ENCODE measurements at regions of chr19 and their contacts with region 1.

Region 1: DNA sequence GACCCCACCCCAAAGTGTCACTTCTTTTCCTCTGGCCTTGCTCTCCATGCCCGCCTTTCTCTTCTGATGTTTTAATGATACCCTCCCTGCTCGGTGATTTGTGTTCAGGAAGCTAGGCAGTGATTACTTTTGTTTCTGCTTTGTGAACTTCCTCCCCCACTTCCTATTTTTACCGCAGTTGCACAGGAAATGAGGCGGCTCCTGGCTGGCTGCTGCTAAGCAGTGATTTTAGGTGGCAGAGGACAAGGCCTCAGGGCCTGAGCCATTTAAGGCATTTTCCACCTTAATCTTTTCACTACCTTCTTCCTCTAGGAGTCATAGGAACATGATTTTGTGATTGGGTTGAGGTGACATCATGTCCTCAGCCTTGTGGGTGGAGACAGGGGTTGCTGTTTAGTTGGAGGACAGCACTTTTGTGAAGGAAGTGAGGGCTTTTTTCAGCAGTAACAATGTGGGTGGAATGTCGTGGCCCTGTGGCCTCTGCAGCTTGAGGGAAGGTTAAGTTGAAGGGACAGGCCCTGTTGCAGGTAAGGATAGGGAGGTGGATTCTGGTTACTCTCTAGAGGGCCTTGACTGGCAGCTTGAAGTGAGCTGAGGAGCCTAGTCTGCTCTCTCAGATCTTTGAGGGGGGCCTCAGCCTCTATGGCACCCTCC is 15.7 kb downstream of the GARRE1 start:
- DNase-seq: peak; percentile 87 to 93 (median 89)
- H3K4me3 ChIP-seq: peak overlapping the region; percentile 18 to 43
- H3K4me3 Mint-ChIP-seq: peak overlapping the region; percentile 68 to 87 (median 82)
- H3K27ac ChIP-seq: peak overlapping the region; percentile 68
- H3K27ac Mint-ChIP-seq: peak overlapping the region; percentile 90 to 99 (median 98)
- H3K4me1 ChIP-seq: peaks cover 95% of the 10 kb centered on the region
- H3K4me1 Mint-ChIP-seq: peaks cover 52 to 83% (median 74%) of the 10 kb centered on the region in 4 donors
- H3K27me3 ChIP-seq: no peaks in the 10 kb centered on the region
- H3K27me3 Mint-ChIP-seq: no peaks in the 10 kb centered on the region

Region 2: DNA sequence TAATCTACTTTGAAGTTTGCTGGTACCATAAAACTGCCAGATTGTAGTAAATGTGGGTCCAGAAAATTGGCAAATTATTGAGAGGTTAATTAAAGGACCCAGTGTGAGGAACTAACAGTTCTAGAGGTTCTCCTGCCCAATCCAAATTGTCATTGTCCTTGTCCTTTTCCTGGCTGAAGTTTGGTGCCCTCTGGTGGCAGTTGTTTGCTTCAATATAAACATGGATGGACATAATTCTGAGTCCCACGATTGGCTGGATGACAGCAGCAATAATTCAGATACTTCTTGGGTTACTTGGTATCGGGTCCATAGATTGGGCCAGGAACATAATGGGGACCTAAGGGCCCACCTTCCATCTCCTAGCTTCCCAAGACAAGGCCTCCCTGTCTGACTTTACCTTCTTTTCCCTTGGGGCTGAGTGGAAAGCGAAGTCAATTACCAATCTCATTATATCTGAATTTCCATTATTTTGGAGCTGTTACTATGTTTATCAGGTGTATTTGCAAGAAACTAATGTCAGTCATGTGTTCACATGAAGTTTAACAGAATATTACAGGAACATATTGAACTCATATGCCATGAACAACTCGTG is 49.5 kb before region 1 on chr19:
- CTCF ChIA-PET with region 1: interaction called, 9 read pairs
- POLR2A ChIA-PET with region 1: interaction called, 14 read pairs
- intact Hi-C with region 1: loop called (anchors 1 kb)
- DNase-seq: peak; percentile 39 to 57 (median 52)
- H3K4me3 ChIP-seq: no peak overlapping the region
- H3K4me3 Mint-ChIP-seq: peak overlapping the region in 1 of 8 donors; percentile 44
- H3K27ac ChIP-seq: no peak overlapping the region
- H3K27ac Mint-ChIP-seq: peak overlapping the region in 6 of 7 donors; percentile 0 to 83 (median 39)
- H3K4me1 ChIP-seq: peaks cover 42% of the 10 kb centered on the region
- H3K4me1 Mint-ChIP-seq: peaks cover 45 to 68% (median 53%) of the 10 kb centered on the region in 4 donors
- H3K27me3 ChIP-seq: no peaks in the 10 kb centered on the region
- H3K27me3 Mint-ChIP-seq: no peaks in the 10 kb centered on the region

Region 3: GRCh38 chr19:34253699-34254551 is 16.2 kb before region 1 on chr19:
- CTCF ChIA-PET with region 1: interaction called, 5 read pairs
- POLR2A ChIA-PET with region 1: interaction called, 19 read pairs
- intact Hi-C with region 1: loop called (anchors 1 kb)
- DNase-seq: peak in 3 of 5 donors; percentile 80 to 85 (median 82)
- H3K4me3 ChIP-seq: peak overlapping the region; percentile 67 to 75
- H3K4me3 Mint-ChIP-seq: peak overlapping the region; percentile 96 to 100 (median 98)
- H3K27ac ChIP-seq: peak overlapping the region; percentile 90
- H3K27ac Mint-ChIP-seq: peak overlapping the region; percentile 81 to 100 (median 99)
- H3K4me1 ChIP-seq: peaks cover 32% of the 10 kb centered on the region
- H3K4me1 Mint-ChIP-seq: peaks cover 17 to 42% (median 32%) of the 10 kb centered on the region in 4 donors
- H3K27me3 ChIP-seq: no peaks in the 10 kb centered on the region
- H3K27me3 Mint-ChIP-seq: no peaks in the 10 kb centered on the region

Region 4: GRCh38 chr19:34308381-34309367 is 38.6 kb after region 1 on chr19:
- CTCF ChIA-PET with region 1: interaction called, 3 read pairs
- POLR2A ChIA-PET with region 1: interaction called, 19 read pairs
- intact Hi-C with region 1: loop called (anchors 5 kb)
- DNase-seq: peak; percentile 55 to 82 (median 76)
- H3K4me3 ChIP-seq: no peak overlapping the region
- H3K4me3 Mint-ChIP-seq: peak overlapping the region in 7 of 8 donors; percentile 38 to 80 (median 78)
- H3K27ac ChIP-seq: peak overlapping the region; percentile 57
- H3K27ac Mint-ChIP-seq: peak overlapping the region; percentile 87 to 99 (median 95)
- H3K4me1 ChIP-seq: peaks cover 35% of the 10 kb centered on the region
- H3K4me1 Mint-ChIP-seq: peaks cover 42 to 69% (median 59%) of the 10 kb centered on the region in 4 donors
- H3K27me3 ChIP-seq: no peaks in the 10 kb centered on the region
- H3K27me3 Mint-ChIP-seq: no peaks in the 10 kb centered on the region

Region 5: DNA sequence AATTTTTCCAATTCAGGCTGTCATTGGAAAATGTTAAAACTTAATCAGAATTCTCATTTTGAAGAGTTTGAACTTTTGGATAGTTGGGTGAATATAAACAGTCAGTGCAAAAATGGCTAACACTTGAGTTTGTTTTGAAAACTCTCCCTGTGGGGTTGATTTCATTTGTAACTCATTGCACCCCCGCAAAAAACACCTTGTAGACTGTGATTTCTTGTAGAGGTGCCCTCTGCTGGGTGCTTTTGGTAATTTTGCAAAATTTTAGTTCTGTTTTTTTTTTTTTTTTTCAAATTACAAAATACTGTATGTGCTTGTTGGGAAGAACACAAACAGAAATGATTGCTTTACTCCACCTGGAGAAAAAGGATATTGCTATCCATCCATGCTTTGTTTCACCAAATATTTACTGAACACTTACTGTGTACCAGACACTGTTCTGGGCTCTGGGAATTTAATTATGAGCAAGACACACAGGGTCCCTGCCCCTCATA is 66.7 kb after region 1 on chr19:
- CTCF ChIA-PET with region 1: no interaction called
- POLR2A ChIA-PET with region 1: interaction called, 4 read pairs
- intact Hi-C with region 1: loop called (anchors 2 kb)
- DNase-seq: peak; percentile 54 to 58 (median 56)
- H3K4me3 ChIP-seq: no peak overlapping the region
- H3K4me3 Mint-ChIP-seq: no peak overlapping the region
- H3K27ac ChIP-seq: no peak overlapping the region
- H3K27ac Mint-ChIP-seq: peak overlapping the region in 6 of 7 donors; percentile 10 to 80 (median 64)
- H3K4me1 ChIP-seq: peaks cover 11% of the 10 kb centered on the region
- H3K4me1 Mint-ChIP-seq: peaks cover 4 to 10% (median 8%) of the 10 kb centered on the region in 4 donors
- H3K27me3 ChIP-seq: no peaks in the 10 kb centered on the region
- H3K27me3 Mint-ChIP-seq: no peaks in the 10 kb centered on the region

Region 6: GRCh38 chr19:34351382-34351826 is 81.3 kb after region 1 on chr19:
- CTCF ChIA-PET with region 1: interaction called, 4 read pairs
- POLR2A ChIA-PET with region 1: interaction called, 3 read pairs
- intact Hi-C with region 1: loop called (anchors 1 kb)
- DNase-seq: peak in 1 of 5 donors; percentile 43
- H3K4me3 ChIP-seq: no peak overlapping the region
- H3K4me3 Mint-ChIP-seq: peak overlapping the region in 5 of 8 donors; percentile 29 to 58 (median 46)
- H3K27ac ChIP-seq: peak overlapping the region; percentile 26
- H3K27ac Mint-ChIP-seq: peak overlapping the region; percentile 47 to 86 (median 73)
- H3K4me1 ChIP-seq: peaks cover 35% of the 10 kb centered on the region
- H3K4me1 Mint-ChIP-seq: peaks cover 14 to 38% (median 20%) of the 10 kb centered on the region in 4 donors
- H3K27me3 ChIP-seq: no peaks in the 10 kb centered on the region
- H3K27me3 Mint-ChIP-seq: no peaks in the 10 kb centered on the region

Measured in CD4-positive, alpha-beta memory T cell (primary cell).